Mammary epithelial cell (primary cell): ENCODE measurements at regions of chrX and their contacts with region 1.

Region 1: GRCh38 chrX:155056877-155057792 is 13.8 kb downstream of the CMC4 start:
- DNase-seq: peak; percentile 53
- H3K4me3 ChIP-seq: peak overlapping the region in 1 of 3 experiments; percentile 13
- H3K27ac ChIP-seq: no peak overlapping the region
- H3K4me1 ChIP-seq: no peaks in the 10 kb centered on the region
- H3K27me3 ChIP-seq: no peaks in the 10 kb centered on the region
- CTCF ChIP-seq: peak; percentile 52 to 68

Region 2: DNA sequence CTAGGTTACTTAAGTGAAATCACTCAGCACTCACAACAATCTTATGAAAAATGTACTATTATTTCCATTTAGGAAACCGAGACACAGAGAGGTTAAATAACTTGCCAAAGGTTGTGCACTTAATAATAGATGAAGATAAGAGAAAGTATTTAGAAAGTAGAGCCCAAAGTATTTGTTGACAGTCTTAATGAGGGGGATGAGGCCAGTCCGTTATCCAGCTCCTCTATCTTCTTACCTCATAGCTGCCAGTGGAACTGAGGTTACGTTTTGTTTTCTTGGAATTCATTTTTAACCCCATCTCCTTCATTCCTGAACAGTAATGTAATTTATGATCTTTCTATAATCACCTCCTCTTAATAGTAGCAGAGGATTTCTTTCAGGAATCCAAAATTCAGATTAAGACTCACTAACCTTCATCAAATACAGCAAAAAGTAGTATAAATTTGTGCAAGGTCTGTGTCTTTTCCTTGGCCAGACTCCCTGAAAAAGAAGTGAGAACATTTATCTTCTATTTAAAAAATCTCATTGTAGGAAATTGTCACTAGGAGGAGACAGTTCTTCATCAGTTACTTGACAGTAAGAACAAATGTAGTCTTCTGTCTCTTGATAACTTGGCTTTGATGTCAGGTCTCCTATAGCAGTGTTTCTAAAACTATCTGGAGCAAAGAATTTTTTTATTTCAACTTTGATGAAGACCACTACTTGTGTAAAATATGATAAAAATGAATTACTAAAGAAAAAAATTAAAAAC is 70.1 kb before region 1 on chrX:
- CTCF ChIA-PET with region 1: no interaction called
- dilution Hi-C with region 1: no loop called
- in situ Hi-C with region 1: loop called (anchors 5 to 10 kb)
- intact Hi-C with region 1: loop called (anchors 1 kb)
- DNase-seq: no peak
- H3K4me3 ChIP-seq: no peak overlapping the region
- H3K27ac ChIP-seq: no peak overlapping the region
- H3K4me1 ChIP-seq: peaks cover 5% of the 10 kb centered on the region
- H3K27me3 ChIP-seq: no peaks in the 10 kb centered on the region
- CTCF ChIP-seq: peak in 1 of 2 donors; percentile 35